Activated naive CD4-positive, alpha-beta T cell treated with anti-CD3 and anti-CD28 coated beads for 36 hours (primary cell): ENCODE measurements at regions of chr3 and their contacts with region 1.

Region 1: DNA sequence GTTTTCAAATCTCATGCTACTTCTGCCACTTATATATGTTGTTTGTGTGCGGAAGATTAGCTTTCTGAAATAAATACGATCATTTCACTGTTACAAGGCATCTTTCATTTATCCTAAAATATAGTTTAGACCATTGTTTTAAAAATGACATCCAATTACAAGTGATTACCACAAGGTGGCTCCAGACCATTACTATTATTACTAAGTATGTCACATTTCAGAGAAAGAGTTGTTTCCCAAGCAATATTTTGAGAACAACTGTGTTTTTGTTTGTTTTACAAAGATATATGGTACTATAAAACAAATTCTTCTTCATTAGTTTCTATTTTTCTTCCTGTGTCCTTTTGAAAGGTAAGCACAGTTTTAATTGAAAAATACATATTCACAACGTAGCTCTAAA is 136.0 kb upstream of the RAP2B start:
- DNase-seq: no peak
- H3K4me3 Mint-ChIP-seq: no peak overlapping the region
- H3K27ac Mint-ChIP-seq: no peak overlapping the region
- H3K4me1 Mint-ChIP-seq: no peaks in the 10 kb centered on the region
- H3K27me3 Mint-ChIP-seq: peaks cover 3% of the 10 kb centered on the region

Region 2: GRCh38 chr3:153291056-153291685 is 265.1 kb after region 1 on chr3:
- CTCF ChIA-PET with region 1: no interaction called
- intact Hi-C with region 1: loop called (anchors 1 kb)
- DNase-seq: peak; percentile 20
- H3K4me3 Mint-ChIP-seq: no peak overlapping the region
- H3K27ac Mint-ChIP-seq: peak overlapping the region; percentile 26
- H3K4me1 Mint-ChIP-seq: peaks cover 40% of the 10 kb centered on the region
- H3K27me3 Mint-ChIP-seq: no peaks in the 10 kb centered on the region

Region 3: DNA sequence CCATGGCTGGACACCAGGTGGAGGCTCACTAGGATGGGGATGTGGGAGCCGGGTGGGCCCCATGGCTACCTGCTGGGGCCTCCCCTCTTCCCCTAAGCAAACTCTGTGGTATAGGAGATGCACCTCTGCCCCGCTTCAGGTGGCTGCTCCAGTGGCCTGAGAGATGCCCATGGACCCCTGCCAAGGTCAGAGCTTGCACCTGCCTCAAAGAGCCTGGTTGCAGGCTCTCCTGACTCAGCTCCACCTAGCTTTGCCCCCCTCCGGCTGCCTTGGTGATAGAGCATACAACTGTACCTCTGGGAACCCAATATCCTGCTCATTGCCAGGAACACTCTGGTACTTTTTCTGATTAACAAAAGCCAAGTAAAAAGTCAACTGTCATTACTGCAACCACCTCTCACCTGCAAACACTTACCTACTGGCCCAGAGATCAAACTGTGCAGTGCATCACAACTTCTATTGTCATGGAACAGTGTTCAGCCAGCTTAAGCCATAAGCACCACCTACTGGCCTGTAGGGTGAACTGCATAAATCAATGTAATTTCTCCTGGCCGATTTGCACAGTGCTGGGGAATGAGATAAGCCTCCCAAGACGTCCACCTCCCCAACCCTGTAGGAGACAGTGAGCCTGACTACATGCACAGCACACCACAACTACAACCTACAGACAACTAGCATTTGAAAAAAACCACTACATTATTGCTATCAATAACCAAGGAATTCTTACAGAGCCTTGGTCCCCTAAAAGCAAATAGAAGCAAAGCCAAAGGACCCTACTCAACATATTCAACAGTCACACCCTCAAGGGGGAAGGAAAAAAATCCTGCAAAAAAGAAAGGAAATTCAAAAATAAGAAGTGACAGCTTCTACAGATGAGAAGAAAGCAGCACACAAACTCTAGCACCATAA is 742.8 kb after region 1 on chr3:
- CTCF ChIA-PET with region 1: no interaction called
- intact Hi-C with region 1: loop called (anchors 1 kb)
- DNase-seq: peak; percentile 63
- H3K4me3 Mint-ChIP-seq: no peak overlapping the region
- H3K27ac Mint-ChIP-seq: no peak overlapping the region
- H3K4me1 Mint-ChIP-seq: peaks cover 1% of the 10 kb centered on the region
- H3K27me3 Mint-ChIP-seq: peaks cover 8% of the 10 kb centered on the region

Region 4: DNA sequence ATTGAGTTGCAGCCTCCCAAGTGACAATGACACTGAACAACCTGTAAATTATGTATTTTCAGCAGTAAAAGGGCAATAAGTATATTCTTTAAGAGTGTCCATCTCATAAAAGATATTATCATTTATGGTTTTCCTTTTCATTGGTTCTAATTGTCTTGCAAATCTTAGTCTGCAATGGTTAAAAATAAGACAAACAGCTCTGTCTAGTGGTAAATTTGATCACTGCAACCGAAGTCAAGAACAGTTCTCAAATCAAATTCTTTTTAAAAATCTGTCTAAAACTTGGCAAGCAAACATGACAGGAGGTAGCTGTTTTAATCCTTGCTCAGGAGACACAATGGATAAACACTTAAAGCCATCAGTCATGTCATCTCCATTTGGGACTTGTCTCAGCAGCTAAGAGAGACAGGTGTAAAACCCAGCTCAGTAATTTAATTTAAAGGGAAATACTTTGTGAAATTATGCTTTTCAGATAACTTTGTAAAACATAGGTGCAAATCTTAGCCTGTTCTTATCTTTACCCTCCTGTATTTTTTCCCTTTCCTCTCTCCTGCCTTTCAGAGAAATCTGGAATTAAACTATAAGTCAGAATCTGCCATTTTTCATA is 944.8 kb after region 1 on chr3:
- CTCF ChIA-PET with region 1: no interaction called
- intact Hi-C with region 1: loop called (anchors 1 kb)
- DNase-seq: no peak
- H3K4me3 Mint-ChIP-seq: no peak overlapping the region
- H3K27ac Mint-ChIP-seq: no peak overlapping the region
- H3K4me1 Mint-ChIP-seq: no peaks in the 10 kb centered on the region
- H3K27me3 Mint-ChIP-seq: peaks cover 15% of the 10 kb centered on the region

Region 5: GRCh38 chr3:154252759-154253638 is 1227.0 kb after region 1 on chr3:
- CTCF ChIA-PET with region 1: interaction called, 8 read pairs
- intact Hi-C with region 1: loop called (anchors 2 kb)
- DNase-seq: peak; percentile 88
- H3K4me3 Mint-ChIP-seq: no peak overlapping the region
- H3K27ac Mint-ChIP-seq: no peak overlapping the region
- H3K4me1 Mint-ChIP-seq: no peaks in the 10 kb centered on the region
- H3K27me3 Mint-ChIP-seq: no peaks in the 10 kb centered on the region